H1 (cell line): ENCODE measurements at regions of chr17 and their contacts with region 1.

Region 1: DNA sequence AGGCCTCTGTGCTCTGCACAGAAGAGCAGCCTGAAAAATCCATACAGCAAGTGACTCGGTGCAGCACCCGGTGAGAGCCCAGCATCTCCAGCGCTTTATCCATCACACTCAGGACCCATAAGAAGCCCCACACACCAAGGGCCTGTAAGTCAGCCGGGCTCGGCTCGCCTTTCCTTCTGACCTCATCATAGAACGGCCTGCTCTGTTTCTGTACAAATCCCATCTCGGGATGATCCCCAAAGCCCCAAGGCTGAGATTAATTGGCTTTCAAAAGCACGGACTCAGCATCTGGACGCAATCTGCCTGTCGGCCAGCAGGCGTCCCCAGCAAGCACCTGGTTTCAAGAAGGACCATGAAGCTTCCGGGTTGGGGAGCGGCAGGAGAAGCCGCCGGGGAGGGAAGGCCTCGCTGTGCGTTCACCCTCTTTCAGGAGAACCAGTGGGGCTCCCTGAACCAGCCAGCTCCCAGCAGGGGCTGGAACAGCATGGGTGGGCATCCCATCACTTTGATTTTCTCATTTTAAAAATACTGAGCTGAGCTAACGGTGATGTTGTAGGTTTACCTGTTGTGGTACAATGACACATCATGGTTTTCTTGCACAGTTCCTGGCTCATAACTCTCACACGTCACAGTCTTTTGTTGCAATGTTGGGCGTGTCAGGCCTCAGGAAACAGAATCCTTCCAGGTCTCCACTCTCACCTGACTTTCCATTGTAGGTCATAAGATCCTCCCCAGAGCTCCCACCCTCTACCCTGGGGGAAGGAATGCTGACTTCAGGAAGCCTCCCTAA is 6.7 kb downstream of the CCDC57 start:
- DNase-seq: peak; percentile 34 to 82
- H3K4me3 ChIP-seq: no peak overlapping the region
- H3K27ac ChIP-seq: no peak overlapping the region
- H3K4me1 ChIP-seq: peaks cover 0 to 2% (median 2%) of the 10 kb centered on the region in 4 experiments; a peak in 3 of 7 replicates
- H3K27me3 ChIP-seq: no peaks in the 10 kb centered on the region
- CTCF ChIP-seq: peak; percentile 83 to 93 (median 90)
- EP300 ChIP-seq: no peak
- POLR2A ChIP-seq: no peak
- RAD21 ChIP-seq: peak; percentile 61 to 69

Region 2: GRCh38 chr17:82193520-82194220 is 12.2 kb before region 1 on chr17:
- CTCF ChIA-PET with region 1: interaction called, 15 read pairs
- POLR2A ChIA-PET with region 1: interaction called, 3 read pairs
- DNase-seq: no peak
- H3K4me3 ChIP-seq: no peak overlapping the region
- H3K27ac ChIP-seq: no peak overlapping the region
- H3K4me1 ChIP-seq: no peaks in the 10 kb centered on the region
- H3K27me3 ChIP-seq: no peaks in the 10 kb centered on the region
- CTCF ChIP-seq: no peak
- EP300 ChIP-seq: no peak
- POLR2A ChIP-seq: no peak
- RAD21 ChIP-seq: no peak